A673 (cell line): ENCODE measurements at regions of chr6 and their contacts with region 1.

Region 1: GRCh38 chr6:156564127-156564806 is 212.9 kb upstream of the ARID1B start:
- DNase-seq: peak; percentile 70
- H3K4me3 ChIP-seq: no peak overlapping the region
- H3K27ac ChIP-seq: no peak overlapping the region
- H3K4me1 ChIP-seq: no peaks in the 10 kb centered on the region
- H3K27me3 ChIP-seq: no peaks in the 10 kb centered on the region
- CTCF ChIP-seq: peak; percentile 99

Region 2: DNA sequence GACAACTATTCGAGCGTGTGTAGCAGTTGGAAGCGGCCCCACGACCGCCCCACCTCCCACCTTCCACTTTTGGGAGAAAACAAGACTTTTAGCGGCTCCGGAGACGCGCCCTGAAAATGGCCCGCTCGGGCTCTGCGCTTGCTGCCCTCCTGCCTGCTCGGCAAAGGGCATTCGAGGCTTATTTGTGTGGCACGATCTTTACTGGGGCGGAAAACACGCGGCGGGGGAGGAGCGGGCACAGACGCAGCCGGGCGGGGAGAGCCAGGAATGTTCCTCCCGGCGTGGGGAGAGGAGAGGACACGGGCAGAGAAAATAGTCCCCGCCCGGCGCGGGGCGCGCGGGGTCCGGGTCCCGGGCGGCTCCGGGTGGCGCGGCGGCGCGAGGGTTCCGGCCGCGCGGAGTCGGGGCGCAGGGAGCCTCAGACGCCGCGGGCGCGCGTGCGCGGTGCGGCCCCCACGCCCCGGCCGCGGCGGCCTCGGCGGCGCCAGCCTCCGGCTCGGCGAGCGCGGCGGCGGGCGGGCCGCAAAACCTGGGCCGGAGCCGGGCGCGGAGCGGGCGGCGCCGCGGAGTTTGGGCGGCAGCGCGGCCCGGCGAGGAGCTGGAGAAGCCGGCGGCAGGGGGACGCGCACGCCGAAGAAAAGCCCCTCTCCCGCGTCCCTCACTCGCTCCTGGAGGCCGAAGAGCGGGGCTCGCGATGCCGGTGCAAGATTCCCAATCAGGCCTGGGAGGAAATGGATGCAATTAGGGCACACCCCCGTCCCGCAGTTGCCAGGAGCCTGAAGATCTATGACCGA is 122.9 kb after region 1 on chr6:
- CTCF ChIA-PET with region 1: no interaction called
- POLR2A ChIA-PET with region 1: no interaction called
- intact Hi-C with region 1: loop called (anchors 2 kb)
- DNase-seq: peak; percentile 91
- H3K4me3 ChIP-seq: peak overlapping the region; percentile 64
- H3K27ac ChIP-seq: peak overlapping the region; percentile 96
- H3K4me1 ChIP-seq: peaks cover 5% of the 10 kb centered on the region
- H3K27me3 ChIP-seq: no peaks in the 10 kb centered on the region
- CTCF ChIP-seq: no peak